ENCODE measurements at regions of chr17 and their contacts with region 1.

Region 1: DNA sequence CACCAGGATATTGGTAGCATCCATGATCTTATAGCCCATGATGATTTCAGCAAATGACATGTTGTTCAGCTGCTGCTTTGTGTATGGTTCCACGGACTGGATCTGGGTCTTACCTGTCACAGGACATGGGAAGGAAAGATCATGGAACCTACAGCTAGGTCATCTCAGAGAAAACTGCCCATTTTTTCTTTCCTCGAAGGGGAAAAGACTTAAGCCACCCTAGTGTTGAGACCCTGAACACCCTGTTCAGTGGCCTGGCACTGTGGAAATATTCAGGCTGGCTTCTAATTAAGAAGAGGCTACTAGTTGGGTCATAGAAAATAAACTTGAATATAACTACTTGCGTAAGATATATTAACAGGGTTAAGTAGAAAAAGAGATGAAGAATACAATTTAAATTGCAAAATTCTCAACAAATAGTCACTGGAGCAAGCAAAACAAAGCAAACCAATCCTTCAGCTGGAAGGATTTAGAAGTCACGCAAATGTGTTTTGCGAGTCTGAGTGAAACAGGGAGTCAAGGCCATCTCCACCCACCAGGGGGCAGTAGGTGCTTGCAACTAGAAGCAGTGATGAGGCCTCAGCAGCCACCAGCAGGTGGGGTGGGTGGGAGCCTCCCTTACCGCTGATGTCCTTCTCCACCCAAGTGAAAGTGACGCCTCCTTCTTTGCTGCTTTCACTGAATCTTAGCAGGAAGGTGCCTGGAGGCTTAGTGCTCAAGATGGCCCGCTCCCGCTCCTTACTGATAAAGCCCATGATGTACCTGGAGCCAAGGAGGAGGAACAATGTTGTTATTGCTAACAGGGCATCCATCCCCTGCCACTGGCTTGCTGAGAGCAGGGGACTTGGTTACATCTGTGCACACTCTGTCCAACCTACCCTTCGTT is 34.3 kb downstream of the STAT5A start:
- DNase-seq: peak; percentile 89 to 98 (median 96)
- ATAC-seq: peak; percentile 97
- H3K4me3 ChIP-seq: no peak overlapping the region
- H3K4me3 Mint-ChIP-seq: no peak overlapping the region
- H3K27ac ChIP-seq: peak overlapping the region in 1 of 2 experiments; percentile 38
- H3K27ac Mint-ChIP-seq: peak overlapping the region; percentile 82
- H3K4me1 ChIP-seq: peaks cover 17% of the 10 kb centered on the region
- H3K4me1 Mint-ChIP-seq: peaks cover 40% of the 10 kb centered on the region
- H3K27me3 ChIP-seq: no peaks in the 10 kb centered on the region
- H3K27me3 Mint-ChIP-seq: no peaks in the 10 kb centered on the region
- CTCF ChIP-seq: peak; percentile 99

Region 2: DNA sequence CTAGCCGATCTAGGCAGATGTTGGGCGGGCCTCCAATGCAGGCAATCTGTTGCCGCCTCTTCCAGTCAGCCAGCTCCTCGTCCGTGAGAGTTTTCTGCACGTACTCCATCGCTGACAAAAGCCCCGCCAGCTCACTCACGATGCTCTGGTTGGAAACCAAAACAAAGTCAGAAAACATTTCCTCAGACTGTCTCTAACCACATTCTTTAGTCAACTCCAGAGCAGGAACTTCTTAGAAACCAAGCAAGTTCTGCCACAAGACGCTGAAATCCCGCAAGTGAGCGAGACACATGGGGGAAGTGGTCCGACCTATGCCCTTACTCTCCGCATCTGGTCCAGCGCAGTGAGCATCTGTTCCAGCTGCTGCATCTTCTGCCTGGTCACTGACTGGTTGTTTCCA is 14.8 kb after region 1 on chr17:
- CTCF ChIA-PET with region 1: interaction called, 11 read pairs
- POLR2A ChIA-PET with region 1: interaction called, 4 read pairs
- intact Hi-C with region 1: no loop called
- DNase-seq: peak; percentile 31 to 87 (median 67)
- ATAC-seq: peak; percentile 85
- H3K4me3 ChIP-seq: no peak overlapping the region
- H3K4me3 Mint-ChIP-seq: peak overlapping the region; percentile 57
- H3K27ac ChIP-seq: peak overlapping the region; percentile 41 to 54
- H3K27ac Mint-ChIP-seq: peak overlapping the region; percentile 92
- H3K4me1 ChIP-seq: peaks cover 31% of the 10 kb centered on the region
- H3K4me1 Mint-ChIP-seq: peaks cover 39% of the 10 kb centered on the region
- H3K27me3 ChIP-seq: no peaks in the 10 kb centered on the region
- H3K27me3 Mint-ChIP-seq: no peaks in the 10 kb centered on the region
- CTCF ChIP-seq: no peak

Region 3: DNA sequence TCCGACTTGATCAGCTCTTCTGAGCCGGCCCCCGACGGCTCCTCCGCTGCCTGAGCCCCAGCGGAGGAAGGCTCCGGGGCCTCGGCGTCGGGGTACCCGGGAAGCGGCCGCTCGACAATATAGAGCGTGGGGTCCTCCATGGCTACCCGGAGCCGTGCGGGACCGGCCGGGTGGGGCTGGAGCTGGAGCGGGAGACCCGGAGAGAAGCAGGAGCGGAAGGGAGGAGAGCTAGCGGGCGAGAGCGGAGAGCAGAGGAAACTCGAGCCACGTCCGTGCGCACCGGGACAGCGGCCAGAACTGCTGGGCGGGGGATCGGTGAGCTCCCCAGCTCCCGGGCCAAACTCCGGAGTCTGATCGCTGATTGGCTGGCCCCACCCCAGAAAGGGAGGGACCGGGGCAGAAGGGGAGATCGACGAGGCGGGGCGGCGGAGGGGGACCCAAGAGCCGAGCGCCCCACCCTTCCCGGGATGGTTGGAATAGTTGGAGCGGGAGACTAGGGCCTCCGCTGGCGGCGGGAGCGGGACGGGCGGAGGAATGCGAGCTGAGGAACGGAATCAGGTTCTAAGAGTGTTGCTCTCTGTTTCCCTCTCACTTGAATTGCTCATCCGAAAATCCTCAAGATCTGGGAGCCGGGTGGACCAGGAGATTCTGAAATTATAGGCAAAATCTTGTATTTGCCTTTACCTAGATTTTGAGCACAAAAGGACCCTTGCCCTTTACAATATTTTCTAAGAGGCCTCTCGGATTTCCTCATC is 100.5 kb after region 1 on chr17 and contains the start of gene CAVIN1:
- CTCF ChIA-PET with region 1: interaction called, 12 read pairs
- POLR2A ChIA-PET with region 1: no interaction called
- intact Hi-C with region 1: no loop called
- DNase-seq: no peak
- ATAC-seq: peak; percentile 12
- H3K4me3 ChIP-seq: peak within 1 kb of the TSS; percentile 26 to 35
- H3K4me3 Mint-ChIP-seq: peak within 1 kb of the TSS; percentile 86
- H3K27ac ChIP-seq: no peak within 1 kb of the TSS
- H3K27ac Mint-ChIP-seq: no peak within 1 kb of the TSS
- H3K4me1 ChIP-seq: peaks cover 11% of the 10 kb centered on the region
- H3K4me1 Mint-ChIP-seq: peaks cover 15% of the 10 kb centered on the region
- H3K27me3 ChIP-seq: peaks cover 11 to 17% of the 10 kb centered on the region in 2 experiments
- H3K27me3 Mint-ChIP-seq: peaks cover 34% of the 10 kb centered on the region
- CTCF ChIP-seq: no peak
- total RNA-seq, gene CAVIN1: not detected

Measured in CD8-positive, alpha-beta T cell (primary cell).